Activated B cell treated with CpG ODN at 0.5 μM for 24 hours (primary cell): ENCODE measurements at regions of chr12 and their contacts with region 1.

Region 1: DNA sequence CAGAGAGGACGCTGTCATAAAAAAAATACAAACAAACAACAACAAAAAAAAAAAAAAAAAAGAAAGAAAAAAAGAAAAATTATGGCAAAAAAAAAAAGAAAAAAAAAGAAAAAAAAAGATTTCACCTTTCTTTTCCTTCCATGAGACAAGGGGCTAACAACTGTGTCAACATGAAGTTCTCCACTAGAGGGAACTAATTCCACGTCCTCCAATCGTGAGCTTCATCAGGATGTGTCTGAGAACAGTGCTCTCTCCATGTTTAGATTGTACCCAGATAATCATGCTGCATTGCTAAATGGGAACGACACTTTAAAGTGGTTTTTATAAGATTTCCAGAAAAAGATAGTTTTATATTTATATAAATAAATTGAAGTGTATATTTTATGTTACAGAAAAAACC is 96.2 kb upstream of the PTPRB start:
- DNase-seq: no peak
- ATAC-seq: no peak
- H3K4me3 Mint-ChIP-seq: no peak overlapping the region
- H3K27ac Mint-ChIP-seq: no peak overlapping the region
- H3K4me1 Mint-ChIP-seq: no peaks in the 10 kb centered on the region
- H3K27me3 Mint-ChIP-seq: no peaks in the 10 kb centered on the region
- CTCF ChIP-seq: no peak

Region 2: GRCh38 chr12:69879041-69879960 is 854.1 kb before region 1 on chr12:
- CTCF ChIA-PET with region 1: interaction called, 36 read pairs
- POLR2A ChIA-PET with region 1: no interaction called
- intact Hi-C with region 1: loop called (anchors 1 kb)
- DNase-seq: peak; percentile 29
- ATAC-seq: peak; percentile 82
- H3K4me3 Mint-ChIP-seq: no peak overlapping the region
- H3K27ac Mint-ChIP-seq: no peak overlapping the region
- H3K4me1 Mint-ChIP-seq: peaks cover 5% of the 10 kb centered on the region
- H3K27me3 Mint-ChIP-seq: peaks cover 15% of the 10 kb centered on the region
- CTCF ChIP-seq: peak; percentile 95

Region 3: DNA sequence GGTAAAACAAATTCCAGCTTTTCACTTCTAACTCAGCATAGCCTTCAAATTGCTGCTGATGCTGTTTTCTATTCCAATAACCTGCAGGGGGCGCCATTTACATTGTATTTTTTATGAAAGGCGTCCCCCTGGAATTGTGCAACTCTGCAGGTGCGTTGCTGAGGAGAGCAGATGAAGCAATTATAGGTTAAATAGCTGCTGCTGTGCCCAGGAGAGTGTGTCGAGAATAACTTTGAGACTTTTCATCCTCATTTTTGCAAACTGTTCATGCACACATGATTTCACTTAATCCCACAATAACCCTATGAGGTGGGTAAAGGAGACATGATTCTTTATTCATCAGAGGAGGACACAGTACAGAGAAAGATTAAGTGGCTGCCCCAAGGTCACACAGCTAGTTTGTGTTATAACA is 832.7 kb before region 1 on chr12:
- CTCF ChIA-PET with region 1: interaction called, 6 read pairs
- POLR2A ChIA-PET with region 1: no interaction called
- intact Hi-C with region 1: loop called (anchors 1 kb)
- DNase-seq: no peak
- ATAC-seq: peak; percentile 40
- H3K4me3 Mint-ChIP-seq: no peak overlapping the region
- H3K27ac Mint-ChIP-seq: no peak overlapping the region
- H3K4me1 Mint-ChIP-seq: no peaks in the 10 kb centered on the region
- H3K27me3 Mint-ChIP-seq: no peaks in the 10 kb centered on the region
- CTCF ChIP-seq: peak; percentile 68

Region 4: GRCh38 chr12:70393787-70394499 is 339.4 kb before region 1 on chr12:
- CTCF ChIA-PET with region 1: no interaction called
- POLR2A ChIA-PET with region 1: no interaction called
- intact Hi-C with region 1: no loop called
- DNase-seq: no peak
- ATAC-seq: no peak
- H3K4me3 Mint-ChIP-seq: no peak overlapping the region
- H3K27ac Mint-ChIP-seq: no peak overlapping the region
- H3K4me1 Mint-ChIP-seq: peaks cover 2% of the 10 kb centered on the region
- H3K27me3 Mint-ChIP-seq: no peaks in the 10 kb centered on the region
- CTCF ChIP-seq: no peak

Region 5: DNA sequence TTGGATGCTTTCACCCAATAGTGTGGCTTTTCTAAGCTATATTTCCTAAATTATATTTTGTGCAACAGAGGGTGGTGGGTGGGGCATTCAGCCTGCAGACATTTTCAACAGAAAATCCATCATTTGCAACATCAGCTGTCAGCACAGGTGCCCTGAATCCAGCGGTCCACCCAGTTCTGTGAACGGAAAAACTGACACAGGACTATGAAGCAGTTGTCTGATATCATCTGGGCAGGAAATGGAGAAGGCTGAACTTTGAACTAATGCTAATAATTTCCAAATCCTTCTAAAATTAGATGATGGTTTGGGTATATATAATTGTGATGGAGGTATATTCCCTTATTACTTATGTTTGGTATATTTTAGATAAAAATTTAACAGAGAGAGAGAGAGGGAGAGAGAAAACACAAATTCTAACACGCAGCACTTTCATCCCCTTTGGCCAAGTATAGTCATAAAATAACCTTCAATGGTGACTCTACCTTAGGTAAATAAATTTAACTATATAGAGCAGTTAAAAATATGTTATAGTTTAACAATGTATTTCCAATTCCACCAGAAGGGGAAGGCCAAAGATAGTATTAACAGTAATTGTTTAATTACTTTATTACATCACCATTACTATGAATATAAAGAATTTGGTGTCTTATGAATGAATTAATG is 37.9 kb before region 1 on chr12:
- CTCF ChIA-PET with region 1: no interaction called
- POLR2A ChIA-PET with region 1: no interaction called
- intact Hi-C with region 1: no loop called
- DNase-seq: no peak
- ATAC-seq: no peak
- H3K4me3 Mint-ChIP-seq: no peak overlapping the region
- H3K27ac Mint-ChIP-seq: no peak overlapping the region
- H3K4me1 Mint-ChIP-seq: no peaks in the 10 kb centered on the region
- H3K27me3 Mint-ChIP-seq: peaks cover 5% of the 10 kb centered on the region
- CTCF ChIP-seq: no peak

Region 6: GRCh38 chr12:70756146-70756586 is 22.8 kb after region 1 on chr12:
- CTCF ChIA-PET with region 1: no interaction called
- POLR2A ChIA-PET with region 1: no interaction called
- intact Hi-C with region 1: no loop called
- DNase-seq: no peak
- ATAC-seq: no peak
- H3K4me3 Mint-ChIP-seq: no peak overlapping the region
- H3K27ac Mint-ChIP-seq: no peak overlapping the region
- H3K4me1 Mint-ChIP-seq: no peaks in the 10 kb centered on the region
- H3K27me3 Mint-ChIP-seq: peaks cover 11% of the 10 kb centered on the region
- CTCF ChIP-seq: no peak